Heart left ventricle (tissue), 16 donors: ENCODE measurements at regions of chr3 and their contacts with region 1.

Region 1: GRCh38 chr3:187836823-187837770 is 91.8 kb upstream of the BCL6 start:
- DNase-seq: no peak
- ATAC-seq: no peak
- H3K4me3 ChIP-seq: no peak overlapping the region
- H3K27ac ChIP-seq: no peak overlapping the region
- H3K4me1 ChIP-seq: no peaks in the 10 kb centered on the region
- H3K27me3 ChIP-seq: no peaks in the 10 kb centered on the region
- CTCF ChIP-seq: no peak
- POLR2A ChIP-seq: no peak

Region 2: GRCh38 chr3:187798531-187799530 is 38.3 kb before region 1 on chr3:
- intact Hi-C with region 1: loop called in 1 of 10 experiments (anchors 1 kb)
- DNase-seq: no peak
- ATAC-seq: no peak
- H3K4me3 ChIP-seq: no peak overlapping the region
- H3K27ac ChIP-seq: peak overlapping the region in 1 of 12 donors; percentile 61
- H3K4me1 ChIP-seq: peaks cover 0 to 29% (median 0%) of the 10 kb centered on the region in 12 donors
- H3K27me3 ChIP-seq: no peaks in the 10 kb centered on the region
- CTCF ChIP-seq: no peak
- POLR2A ChIP-seq: no peak

Region 3: DNA sequence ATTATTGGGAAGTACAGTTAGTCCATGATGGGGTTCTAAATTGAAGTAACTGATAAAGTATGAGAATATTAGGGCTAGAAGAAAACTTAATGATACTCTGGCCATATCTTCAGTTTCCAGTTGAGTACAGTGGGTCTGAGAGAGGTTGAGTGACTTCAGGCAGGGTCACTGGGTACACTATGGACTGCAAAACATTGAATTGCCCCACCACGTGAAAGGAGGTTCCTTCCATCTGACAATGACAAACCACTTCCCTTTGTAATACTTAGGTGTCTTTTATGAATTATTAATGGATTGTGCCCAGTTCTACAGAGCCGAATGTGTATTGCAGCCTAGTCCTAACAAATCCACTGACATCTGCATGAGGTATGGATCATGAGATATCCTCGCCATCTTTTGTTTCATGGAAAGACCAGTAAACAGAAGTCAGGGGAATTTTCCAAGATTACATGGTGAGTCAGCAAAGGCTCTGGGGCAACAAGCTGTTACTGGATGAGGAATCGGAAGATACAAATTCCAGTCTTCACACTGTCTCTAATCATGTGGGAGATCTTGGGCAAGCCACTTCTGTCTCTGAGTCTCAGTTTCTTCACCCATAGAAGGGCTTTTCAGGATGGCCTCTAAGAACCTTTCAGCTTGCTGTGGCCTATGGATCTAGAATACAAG is 25.4 kb before region 1 on chr3:
- intact Hi-C with region 1: no loop called
- DNase-seq: no peak
- ATAC-seq: no peak
- H3K4me3 ChIP-seq: no peak overlapping the region
- H3K27ac ChIP-seq: peak overlapping the region in 1 of 12 donors; percentile 48
- H3K4me1 ChIP-seq: peaks cover 0 to 10% (median 0%) of the 10 kb centered on the region in 12 donors
- H3K27me3 ChIP-seq: no peaks in the 10 kb centered on the region
- CTCF ChIP-seq: no peak
- POLR2A ChIP-seq: no peak

Region 4: DNA sequence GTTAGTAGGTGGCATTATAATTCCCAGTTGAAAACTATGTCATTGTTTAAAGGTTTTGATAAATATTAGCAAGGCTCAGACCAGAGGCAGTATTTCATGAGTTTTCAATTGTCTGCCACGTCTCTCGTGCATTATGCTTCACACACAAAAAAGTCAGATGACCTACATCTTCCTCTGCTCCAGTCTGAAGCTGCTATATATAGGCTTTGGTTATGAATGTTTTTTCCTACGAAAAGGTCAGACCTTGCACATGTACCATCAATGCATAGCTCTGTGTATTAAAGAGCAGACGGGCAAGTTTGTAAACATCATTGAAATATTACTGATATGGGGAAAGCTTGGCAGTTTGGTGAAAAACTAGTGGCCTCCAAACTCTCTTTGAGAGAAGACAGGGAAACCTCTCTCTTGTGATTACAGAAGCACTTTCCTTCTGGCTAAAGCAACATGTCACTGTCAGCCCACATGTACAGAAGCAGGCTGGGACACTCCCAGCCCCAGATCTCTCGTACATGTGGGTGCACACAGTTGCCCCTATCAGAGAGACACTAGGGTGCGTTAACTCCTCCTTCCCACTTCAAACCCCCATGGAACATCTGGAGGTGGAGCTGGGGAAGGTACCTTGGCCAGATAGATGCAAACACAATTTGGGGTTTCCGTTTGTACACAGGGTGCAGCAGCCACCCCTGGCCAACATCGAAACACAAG is 92.2 kb after region 1 on chr3:
- intact Hi-C with region 1: no loop called
- DNase-seq: no peak
- ATAC-seq: peak in 3 of 4 donors; percentile 43 to 51 (median 50)
- H3K4me3 ChIP-seq: no peak overlapping the region
- H3K27ac ChIP-seq: peak overlapping the region in 9 of 12 donors; percentile 6 to 62 (median 40)
- H3K4me1 ChIP-seq: peaks cover 0 to 12% (median 7%) of the 10 kb centered on the region in 12 donors
- H3K27me3 ChIP-seq: no peaks in the 10 kb centered on the region
- CTCF ChIP-seq: no peak
- POLR2A ChIP-seq: no peak